HepG2 (cell line): ENCODE measurements at regions of chr10 and their contacts with region 1.

Region 1: GRCh38 chr10:96017191-96017687 is 26.1 kb upstream of the CCNJ start:
- DNase-seq: peak; percentile 68
- ATAC-seq: peak; percentile 97
- H3K4me3 ChIP-seq: no peak overlapping the region
- H3K27ac ChIP-seq: no peak overlapping the region
- H3K4me1 ChIP-seq: no peaks in the 10 kb centered on the region
- H3K27me3 ChIP-seq: no peaks in the 10 kb centered on the region
- CTCF ChIP-seq: peak; percentile 89
- EP300 ChIP-seq: no peak
- POLR2A ChIP-seq: no peak
- RAD21 ChIP-seq: peak; percentile 73; the same call in 1 of the 2 replicates

Region 2: DNA sequence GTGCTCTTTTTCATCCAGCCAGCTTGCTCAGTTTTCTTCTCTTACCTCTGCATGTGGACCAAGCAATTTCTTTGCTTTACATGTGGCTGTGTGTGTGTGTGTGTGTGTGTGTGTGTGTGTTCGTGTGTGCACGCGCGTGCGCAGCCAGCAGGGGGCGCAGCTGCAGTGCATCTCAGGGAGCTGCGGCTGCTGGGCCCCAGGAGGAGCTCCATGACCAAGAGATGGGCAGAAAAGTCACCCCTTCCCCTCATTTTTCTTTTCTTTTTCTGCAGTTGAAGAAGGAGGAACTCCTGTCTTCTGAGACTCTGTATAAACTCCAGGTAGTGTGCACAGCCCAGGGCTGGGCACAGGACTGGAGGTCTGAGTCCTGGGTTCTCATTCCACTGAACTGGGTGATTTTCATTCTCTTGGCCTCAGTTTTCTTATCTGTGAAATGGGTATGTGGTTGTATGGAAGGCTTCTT is 212.4 kb after region 1 on chr10:
- CTCF ChIA-PET with region 1: interaction called, 4 read pairs
- POLR2A ChIA-PET with region 1: no interaction called
- in situ Hi-C with region 1: no loop called
- intact Hi-C with region 1: loop called (anchors 1 kb)
- DNase-seq: peak; percentile 58
- ATAC-seq: peak; percentile 72
- H3K4me3 ChIP-seq: no peak overlapping the region
- H3K27ac ChIP-seq: peak overlapping the region; percentile 42
- H3K4me1 ChIP-seq: peaks cover 18% of the 10 kb centered on the region
- H3K27me3 ChIP-seq: no peaks in the 10 kb centered on the region
- CTCF ChIP-seq: peak; percentile 94
- EP300 ChIP-seq: no peak
- POLR2A ChIP-seq: no peak
- RAD21 ChIP-seq: peak; percentile 91

Region 3: GRCh38 chr10:96292971-96293920 is 276.0 kb after region 1 on chr10:
- CTCF ChIA-PET with region 1: interaction called, 16 read pairs
- POLR2A ChIA-PET with region 1: no interaction called
- in situ Hi-C with region 1: loop called (anchors 5 kb)
- intact Hi-C with region 1: loop called (anchors 1 kb)
- DNase-seq: peak; percentile 70
- ATAC-seq: peak; percentile 99
- H3K4me3 ChIP-seq: peak overlapping the region in 1 of 3 experiments; percentile 58; a peak in 2 of 6 replicates
- H3K27ac ChIP-seq: no peak overlapping the region
- H3K4me1 ChIP-seq: peaks cover 8% of the 10 kb centered on the region
- H3K27me3 ChIP-seq: peaks cover 0 to 16% of the 10 kb centered on the region in 2 experiments; a peak in 3 of 5 replicates
- CTCF ChIP-seq: peak; percentile 76
- EP300 ChIP-seq: no peak
- POLR2A ChIP-seq: no peak
- RAD21 ChIP-seq: peak; percentile 66; the same call in 1 of the 2 replicates

Region 4: DNA sequence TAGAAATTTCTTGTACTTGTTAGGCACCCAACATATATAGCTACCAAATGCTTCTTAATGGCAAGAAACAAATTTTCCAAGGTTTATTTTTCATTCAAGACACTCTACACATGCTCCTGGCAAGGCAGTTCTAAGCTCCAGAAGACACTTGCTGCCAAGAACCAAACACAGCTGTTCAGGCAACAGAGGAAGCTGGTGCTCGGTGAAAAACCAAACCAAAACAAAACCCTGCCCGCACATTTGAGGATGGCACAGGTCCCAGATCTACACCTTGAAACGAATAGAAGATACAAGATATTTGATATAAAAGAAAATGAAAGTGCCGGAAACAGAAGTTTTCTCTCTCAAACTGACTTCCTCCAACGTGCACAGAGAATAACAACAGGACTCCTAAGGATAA is 282.1 kb after region 1 on chr10:
- CTCF ChIA-PET with region 1: interaction called, 3 read pairs
- POLR2A ChIA-PET with region 1: no interaction called
- in situ Hi-C with region 1: loop called (anchors 5 kb)
- intact Hi-C with region 1: no loop called
- DNase-seq: no peak
- ATAC-seq: no peak
- H3K4me3 ChIP-seq: no peak overlapping the region
- H3K27ac ChIP-seq: no peak overlapping the region
- H3K4me1 ChIP-seq: no peaks in the 10 kb centered on the region
- H3K27me3 ChIP-seq: peaks cover 1 to 16% of the 10 kb centered on the region in 2 experiments; a peak in 4 of 5 replicates
- CTCF ChIP-seq: no peak
- EP300 ChIP-seq: no peak
- POLR2A ChIP-seq: no peak
- RAD21 ChIP-seq: no peak

Region 5: GRCh38 chr10:96339957-96340904 is 323.0 kb after region 1 on chr10:
- CTCF ChIA-PET with region 1: interaction called, 6 read pairs
- POLR2A ChIA-PET with region 1: no interaction called
- in situ Hi-C with region 1: loop called (anchors 5 kb)
- intact Hi-C with region 1: no loop called
- DNase-seq: peak; percentile 47
- ATAC-seq: peak; percentile 82
- H3K4me3 ChIP-seq: no peak overlapping the region
- H3K27ac ChIP-seq: no peak overlapping the region
- H3K4me1 ChIP-seq: no peaks in the 10 kb centered on the region
- H3K27me3 ChIP-seq: 0 out of 5 replicates have a peak, but pooled peaks cover 0 to 7% of the 10 kb centered on the region in 2 experiments
- CTCF ChIP-seq: peak; percentile 70
- EP300 ChIP-seq: no peak
- POLR2A ChIP-seq: no peak
- RAD21 ChIP-seq: no peak